H1 (cell line): ENCODE measurements at regions of chr13 and their contacts with region 1.

Region 1: DNA sequence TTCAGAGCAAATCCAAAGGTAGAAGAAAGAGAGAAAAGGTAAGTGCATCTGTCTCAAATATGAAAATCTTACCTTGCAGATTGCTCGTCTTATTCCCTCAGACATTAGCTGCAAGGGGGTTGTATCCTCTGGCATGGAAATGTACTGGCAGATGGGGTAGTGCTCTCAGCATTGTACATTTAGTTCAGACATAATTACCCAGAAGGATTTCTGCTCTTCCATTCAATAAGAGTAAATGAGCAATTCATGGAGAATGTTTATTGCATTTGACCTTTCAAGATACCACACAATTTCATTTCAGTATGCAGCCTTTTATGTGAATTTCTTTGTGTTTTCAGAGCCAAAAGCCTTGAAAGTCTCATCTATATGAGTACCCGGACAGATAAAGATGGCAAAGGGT is 63.8 kb downstream of the SCEL start:
- DNase-seq: no peak
- H3K4me3 ChIP-seq: no peak overlapping the region
- H3K27ac ChIP-seq: no peak overlapping the region
- H3K4me1 ChIP-seq: peaks cover 0 to 3% (median 1%) of the 10 kb centered on the region in 4 experiments; a peak in 3 of 7 replicates
- H3K27me3 ChIP-seq: no peaks in the 10 kb centered on the region
- CTCF ChIP-seq: no peak
- EP300 ChIP-seq: no peak
- POLR2A ChIP-seq: no peak
- RAD21 ChIP-seq: no peak

Region 2: DNA sequence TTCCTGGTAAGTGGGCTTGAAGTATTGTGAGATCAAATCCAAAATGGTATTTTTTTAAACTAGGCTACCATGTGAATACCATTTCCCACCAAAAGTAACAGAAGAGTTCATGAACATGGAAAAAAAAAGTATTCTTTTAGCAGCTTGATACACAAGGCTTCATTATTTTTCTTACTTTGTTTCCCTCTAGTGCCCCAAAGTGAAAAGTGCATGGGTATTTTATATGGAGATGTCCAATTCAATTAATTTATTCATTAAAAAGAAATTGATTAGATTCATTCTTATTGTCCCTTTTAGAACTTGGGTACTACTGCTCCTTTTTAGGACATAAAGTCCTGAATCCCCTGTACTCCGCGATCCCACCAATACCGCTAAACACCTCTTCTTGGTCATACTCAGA is 92.5 kb before region 1 on chr13:
- CTCF ChIA-PET with region 1: no interaction called
- POLR2A ChIA-PET with region 1: no interaction called
- DNase-seq: no peak
- H3K4me3 ChIP-seq: no peak overlapping the region
- H3K27ac ChIP-seq: no peak overlapping the region
- H3K4me1 ChIP-seq: no peaks in the 10 kb centered on the region
- H3K27me3 ChIP-seq: no peaks in the 10 kb centered on the region
- CTCF ChIP-seq: no peak
- EP300 ChIP-seq: no peak
- POLR2A ChIP-seq: no peak
- RAD21 ChIP-seq: peak in 1 of 2 experiments; percentile 12; a peak in 1 of 4 replicates

Region 3: DNA sequence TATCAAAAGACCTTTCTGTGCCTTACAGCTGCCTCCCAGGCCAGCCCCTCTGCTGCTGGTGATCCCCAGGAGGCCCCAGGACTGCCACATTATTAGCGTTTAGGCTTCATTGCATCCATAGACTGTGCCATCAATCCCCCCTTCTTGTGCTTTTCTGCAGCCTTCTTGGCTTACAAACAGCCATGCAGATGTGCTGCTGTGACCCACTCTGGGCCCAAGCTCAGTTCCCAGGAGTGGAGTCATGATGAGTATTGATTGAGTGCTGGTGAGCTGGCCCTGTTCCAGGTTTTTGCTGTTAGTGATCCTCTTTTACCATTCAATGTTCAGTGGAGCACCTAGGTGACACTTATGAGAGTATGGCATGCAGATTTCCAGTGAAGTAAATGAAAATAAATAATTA is 38.2 kb after region 1 on chr13:
- CTCF ChIA-PET with region 1: no interaction called
- POLR2A ChIA-PET with region 1: no interaction called
- DNase-seq: no peak
- H3K4me3 ChIP-seq: no peak overlapping the region
- H3K27ac ChIP-seq: no peak overlapping the region
- H3K4me1 ChIP-seq: no peaks in the 10 kb centered on the region
- H3K27me3 ChIP-seq: no peaks in the 10 kb centered on the region
- CTCF ChIP-seq: no peak
- EP300 ChIP-seq: no peak
- POLR2A ChIP-seq: no peak
- RAD21 ChIP-seq: no peak

Region 4: GRCh38 chr13:77751513-77752456 is 152.4 kb after region 1 on chr13:
- CTCF ChIA-PET with region 1: interaction called, 104 read pairs
- POLR2A ChIA-PET with region 1: no interaction called
- DNase-seq: no peak
- H3K4me3 ChIP-seq: no peak overlapping the region
- H3K27ac ChIP-seq: no peak overlapping the region
- H3K4me1 ChIP-seq: peaks cover 0 to 2% (median 0%) of the 10 kb centered on the region in 4 experiments; a peak in 1 of 7 replicates
- H3K27me3 ChIP-seq: no peaks in the 10 kb centered on the region
- CTCF ChIP-seq: peak in 2 of 3 experiments; percentile 63 to 78; a peak in 3 of 4 replicates
- EP300 ChIP-seq: no peak
- POLR2A ChIP-seq: no peak
- RAD21 ChIP-seq: peak; percentile 83 to 85